CD8-positive, alpha-beta T cell (primary cell): ENCODE measurements at regions of chr9 and their contacts with region 1.

Region 1: GRCh38 chr9:130866474-130866965 is 30.1 kb downstream of the QRFP start:
- DNase-seq: peak; percentile 6 to 65 (median 51)
- ATAC-seq: peak; percentile 44
- H3K4me3 ChIP-seq: no peak overlapping the region
- H3K4me3 Mint-ChIP-seq: no peak overlapping the region
- H3K27ac ChIP-seq: no peak overlapping the region
- H3K27ac Mint-ChIP-seq: no peak overlapping the region
- H3K4me1 ChIP-seq: no peaks in the 10 kb centered on the region
- H3K4me1 Mint-ChIP-seq: peaks cover 3% of the 10 kb centered on the region
- H3K27me3 ChIP-seq: no peaks in the 10 kb centered on the region
- H3K27me3 Mint-ChIP-seq: no peaks in the 10 kb centered on the region
- CTCF ChIP-seq: peak; percentile 76

Region 2: GRCh38 chr9:130701056-130702022 is 165.2 kb before region 1 on chr9:
- CTCF ChIA-PET with region 1: interaction called, 87 read pairs
- POLR2A ChIA-PET with region 1: no interaction called
- intact Hi-C with region 1: loop called in 1 of 2 experiments (anchors 1 kb)
- DNase-seq: peak; percentile 44 to 80 (median 72)
- ATAC-seq: peak; percentile 95
- H3K4me3 ChIP-seq: no peak overlapping the region
- H3K4me3 Mint-ChIP-seq: no peak overlapping the region
- H3K27ac ChIP-seq: no peak overlapping the region
- H3K27ac Mint-ChIP-seq: no peak overlapping the region
- H3K4me1 ChIP-seq: no peaks in the 10 kb centered on the region
- H3K4me1 Mint-ChIP-seq: peaks cover 18% of the 10 kb centered on the region
- H3K27me3 ChIP-seq: no peaks in the 10 kb centered on the region
- H3K27me3 Mint-ChIP-seq: no peaks in the 10 kb centered on the region
- CTCF ChIP-seq: peak; percentile 87

Region 3: DNA sequence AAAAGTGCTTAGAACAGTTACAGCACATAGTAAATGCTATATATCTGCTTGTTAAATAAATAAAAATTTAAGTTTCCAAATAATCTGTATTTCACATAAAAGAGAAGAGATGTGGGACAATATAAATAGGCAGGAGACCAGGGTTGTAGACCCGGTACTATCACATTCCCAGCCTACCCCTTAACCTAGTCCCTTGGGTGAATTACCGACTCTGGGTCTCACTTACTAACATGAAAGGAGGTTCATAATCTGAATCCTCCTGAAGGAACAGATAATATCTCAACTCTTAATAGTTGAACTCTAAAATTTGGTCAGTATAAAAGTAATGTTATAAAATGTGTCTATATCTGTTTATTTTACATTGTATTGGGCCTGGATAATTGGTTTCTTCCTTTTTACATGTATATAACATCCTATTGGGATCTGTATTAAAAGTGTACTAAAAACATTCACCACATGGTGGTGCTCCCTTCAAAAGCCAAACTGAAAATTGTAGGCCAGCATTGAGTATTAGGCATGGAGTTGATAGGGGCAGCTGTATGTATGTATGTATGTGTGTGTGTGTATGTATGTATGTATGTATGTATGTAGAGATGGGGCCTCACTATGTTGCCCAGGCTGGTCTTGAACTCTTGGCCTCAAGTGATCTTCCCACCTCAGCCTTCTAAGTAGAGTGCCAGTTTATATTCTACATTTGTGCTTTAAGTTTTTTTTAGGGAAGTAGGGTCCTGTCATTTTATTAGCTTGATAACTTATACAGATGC is 95.7 kb before region 1 on chr9:
- CTCF ChIA-PET with region 1: interaction called, 14 read pairs
- POLR2A ChIA-PET with region 1: interaction called, 3 read pairs
- intact Hi-C with region 1: loop called (anchors 1 kb)
- DNase-seq: peak in 2 of 9 experiments; percentile 53 to 63
- ATAC-seq: peak; percentile 77
- H3K4me3 ChIP-seq: no peak overlapping the region
- H3K4me3 Mint-ChIP-seq: no peak overlapping the region
- H3K27ac ChIP-seq: no peak overlapping the region
- H3K27ac Mint-ChIP-seq: no peak overlapping the region
- H3K4me1 ChIP-seq: peaks cover 12% of the 10 kb centered on the region
- H3K4me1 Mint-ChIP-seq: peaks cover 47% of the 10 kb centered on the region
- H3K27me3 ChIP-seq: no peaks in the 10 kb centered on the region
- H3K27me3 Mint-ChIP-seq: no peaks in the 10 kb centered on the region
- CTCF ChIP-seq: peak; percentile 70

Region 4: DNA sequence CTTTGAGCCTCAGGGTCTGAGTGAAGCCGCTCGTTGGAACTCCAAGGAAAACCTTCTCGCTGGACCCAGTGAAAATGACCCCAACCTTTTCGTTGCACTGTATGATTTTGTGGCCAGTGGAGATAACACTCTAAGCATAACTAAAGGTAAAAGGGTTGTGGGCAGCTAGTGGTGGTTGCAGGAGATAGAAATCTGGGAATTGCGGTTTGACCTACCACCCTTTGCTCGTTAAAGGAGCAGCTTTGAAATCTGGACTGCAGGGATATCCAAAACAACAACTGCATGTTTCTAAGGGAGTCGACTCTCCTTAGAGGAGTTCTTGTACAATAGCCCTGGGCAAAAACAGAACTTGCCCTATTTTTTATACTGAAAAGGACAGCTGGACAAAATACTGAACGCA is 12.4 kb before region 1 on chr9:
- CTCF ChIA-PET with region 1: interaction called, 13 read pairs
- POLR2A ChIA-PET with region 1: no interaction called
- intact Hi-C with region 1: no loop called
- DNase-seq: no peak
- ATAC-seq: no peak
- H3K4me3 ChIP-seq: no peak overlapping the region
- H3K4me3 Mint-ChIP-seq: no peak overlapping the region
- H3K27ac ChIP-seq: no peak overlapping the region
- H3K27ac Mint-ChIP-seq: no peak overlapping the region
- H3K4me1 ChIP-seq: no peaks in the 10 kb centered on the region
- H3K4me1 Mint-ChIP-seq: peaks cover 5% of the 10 kb centered on the region
- H3K27me3 ChIP-seq: no peaks in the 10 kb centered on the region
- H3K27me3 Mint-ChIP-seq: no peaks in the 10 kb centered on the region
- CTCF ChIP-seq: no peak

Region 5: DNA sequence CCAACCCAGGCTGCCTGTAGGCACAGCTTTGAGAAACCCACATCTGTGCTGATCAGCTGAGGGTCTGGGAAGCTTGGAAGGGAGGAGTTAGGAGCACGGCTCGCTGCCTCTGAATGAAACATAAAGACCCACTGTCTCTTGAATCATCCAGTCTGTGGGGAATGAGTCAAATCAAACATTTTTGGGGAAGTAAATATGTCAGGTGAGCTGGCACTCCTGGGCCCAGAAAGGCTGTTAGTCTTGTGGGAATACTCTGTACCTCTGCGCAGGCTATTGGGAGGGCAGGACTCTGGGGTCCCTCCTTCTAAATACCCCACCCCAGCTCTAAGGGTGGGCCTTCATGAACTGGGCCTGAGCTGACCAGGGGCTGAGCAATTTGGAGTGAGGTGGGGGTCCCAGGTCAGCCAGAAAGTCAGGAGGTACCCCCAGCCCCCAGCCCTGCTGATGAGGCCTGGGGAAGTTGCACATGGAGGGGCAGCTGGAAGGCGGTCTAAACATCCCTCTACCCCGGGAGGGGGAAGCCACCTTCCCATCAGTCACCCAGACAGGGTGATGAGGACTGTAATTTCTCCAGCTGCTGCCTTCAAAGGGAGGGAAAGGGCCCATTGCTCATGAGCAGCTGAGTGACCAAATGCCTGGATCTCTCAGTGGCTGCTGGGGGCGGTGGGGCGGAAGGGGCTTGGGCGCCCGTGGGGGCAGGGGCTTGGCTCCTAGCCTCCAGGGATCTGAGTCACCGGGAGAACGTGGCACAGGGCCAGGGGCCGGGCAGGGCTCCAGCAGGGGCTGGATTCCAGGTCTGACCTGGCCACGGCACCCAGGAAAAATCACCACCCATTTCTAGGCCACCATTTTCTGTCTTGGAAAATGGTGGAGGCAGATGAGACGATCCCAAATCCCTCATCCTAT is 61.7 kb after region 1 on chr9:
- CTCF ChIA-PET with region 1: no interaction called
- POLR2A ChIA-PET with region 1: no interaction called
- intact Hi-C with region 1: no loop called
- DNase-seq: no peak
- ATAC-seq: no peak
- H3K4me3 ChIP-seq: no peak overlapping the region
- H3K4me3 Mint-ChIP-seq: no peak overlapping the region
- H3K27ac ChIP-seq: no peak overlapping the region
- H3K27ac Mint-ChIP-seq: no peak overlapping the region
- H3K4me1 ChIP-seq: no peaks in the 10 kb centered on the region
- H3K4me1 Mint-ChIP-seq: no peaks in the 10 kb centered on the region
- H3K27me3 ChIP-seq: peaks cover 0 to 2% of the 10 kb centered on the region in 2 experiments
- H3K27me3 Mint-ChIP-seq: peaks cover 22% of the 10 kb centered on the region
- CTCF ChIP-seq: no peak

Region 6: GRCh38 chr9:130940693-130941576 is 74.4 kb after region 1 on chr9:
- CTCF ChIA-PET with region 1: no interaction called
- POLR2A ChIA-PET with region 1: no interaction called
- intact Hi-C with region 1: loop called in 1 of 2 experiments (anchors 2 kb)
- DNase-seq: peak; percentile 55 to 82 (median 68)
- ATAC-seq: peak; percentile 88
- H3K4me3 ChIP-seq: peak overlapping the region in 1 of 2 experiments; percentile 1
- H3K4me3 Mint-ChIP-seq: peak overlapping the region; percentile 18
- H3K27ac ChIP-seq: no peak overlapping the region
- H3K27ac Mint-ChIP-seq: no peak overlapping the region
- H3K4me1 ChIP-seq: peaks cover 10% of the 10 kb centered on the region
- H3K4me1 Mint-ChIP-seq: peaks cover 7% of the 10 kb centered on the region
- H3K27me3 ChIP-seq: peaks cover 5 to 6% of the 10 kb centered on the region in 2 experiments
- H3K27me3 Mint-ChIP-seq: peaks cover 46% of the 10 kb centered on the region
- CTCF ChIP-seq: peak; percentile 68